ENCODE measurements at regions of chr1 and their contacts with region 1.

Region 1: DNA sequence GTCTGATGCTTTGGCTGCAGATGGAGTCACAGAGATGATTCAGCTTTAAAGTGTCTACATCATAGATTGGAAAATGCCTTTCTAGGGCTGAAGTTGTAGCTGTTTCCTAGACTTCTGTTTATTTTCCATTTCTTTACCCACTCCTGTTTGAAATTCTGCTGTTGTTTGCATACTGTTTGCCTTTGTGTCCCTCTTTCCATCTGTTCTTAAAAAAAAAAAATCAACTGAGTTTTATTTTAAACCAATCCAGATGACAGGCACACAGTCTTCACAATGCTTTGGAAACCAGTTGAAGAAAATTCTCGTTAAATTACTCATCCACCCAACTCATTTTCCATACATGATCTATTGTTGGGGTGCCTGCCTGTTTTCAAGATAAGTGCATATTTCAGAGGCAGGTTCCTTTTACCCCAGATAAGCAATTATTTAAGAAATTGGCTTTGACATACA is 245.9 kb downstream of the DISC1 start:
- DNase-seq: no peak
- H3K4me3 ChIP-seq: no peak overlapping the region
- H3K27ac ChIP-seq: no peak overlapping the region
- H3K4me1 ChIP-seq: peaks cover 5% of the 10 kb centered on the region
- H3K27me3 ChIP-seq: no peaks in the 10 kb centered on the region
- CTCF ChIP-seq: no peak
- EP300 ChIP-seq: no peak
- POLR2A ChIP-seq: no peak

Region 2: DNA sequence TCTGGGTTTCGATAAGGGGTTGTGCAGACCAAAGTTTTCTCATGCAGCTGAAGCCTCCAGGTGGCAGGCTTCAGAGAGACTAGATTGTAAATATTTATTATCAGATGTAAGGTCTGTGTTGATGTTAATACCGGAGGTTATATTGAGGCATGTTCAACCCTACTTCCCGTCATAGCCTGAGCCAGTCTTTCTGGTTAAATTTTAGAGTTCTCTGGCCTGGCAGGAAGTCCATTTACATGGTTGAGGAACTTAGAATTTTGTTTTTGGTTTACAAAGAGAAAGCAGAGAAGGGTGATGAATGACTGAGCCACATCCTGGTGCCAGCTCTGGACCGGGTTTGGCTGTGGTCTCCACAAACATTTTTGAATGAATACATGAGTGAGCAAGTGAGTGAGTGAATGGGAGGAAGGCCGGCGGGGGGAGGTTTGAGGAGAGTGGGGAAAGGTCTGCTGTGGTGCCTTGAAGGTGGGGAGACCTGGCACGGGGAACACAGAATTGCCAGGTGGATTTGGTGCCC is 27.4 kb before region 1 on chr1:
- intact Hi-C with region 1: no loop called
- DNase-seq: no peak
- H3K4me3 ChIP-seq: no peak overlapping the region
- H3K27ac ChIP-seq: no peak overlapping the region
- H3K4me1 ChIP-seq: peaks cover 6% of the 10 kb centered on the region
- H3K27me3 ChIP-seq: no peaks in the 10 kb centered on the region
- CTCF ChIP-seq: no peak
- EP300 ChIP-seq: no peak
- POLR2A ChIP-seq: no peak

Region 3: GRCh38 chr1:231931846-231932454 is 59.5 kb after region 1 on chr1:
- intact Hi-C with region 1: loop called in 1 of 4 experiments (anchors 10 kb)
- DNase-seq: no peak
- H3K4me3 ChIP-seq: no peak overlapping the region
- H3K27ac ChIP-seq: no peak overlapping the region
- H3K4me1 ChIP-seq: peaks cover 13% of the 10 kb centered on the region
- H3K27me3 ChIP-seq: no peaks in the 10 kb centered on the region
- CTCF ChIP-seq: no peak
- EP300 ChIP-seq: no peak
- POLR2A ChIP-seq: no peak

Region 4: GRCh38 chr1:231983588-231984193 is 111.2 kb after region 1 on chr1:
- intact Hi-C with region 1: no loop called
- DNase-seq: no peak
- H3K4me3 ChIP-seq: no peak overlapping the region
- H3K27ac ChIP-seq: no peak overlapping the region
- H3K4me1 ChIP-seq: no peaks in the 10 kb centered on the region
- H3K27me3 ChIP-seq: no peaks in the 10 kb centered on the region
- CTCF ChIP-seq: no peak
- EP300 ChIP-seq: no peak
- POLR2A ChIP-seq: no peak

Region 5: DNA sequence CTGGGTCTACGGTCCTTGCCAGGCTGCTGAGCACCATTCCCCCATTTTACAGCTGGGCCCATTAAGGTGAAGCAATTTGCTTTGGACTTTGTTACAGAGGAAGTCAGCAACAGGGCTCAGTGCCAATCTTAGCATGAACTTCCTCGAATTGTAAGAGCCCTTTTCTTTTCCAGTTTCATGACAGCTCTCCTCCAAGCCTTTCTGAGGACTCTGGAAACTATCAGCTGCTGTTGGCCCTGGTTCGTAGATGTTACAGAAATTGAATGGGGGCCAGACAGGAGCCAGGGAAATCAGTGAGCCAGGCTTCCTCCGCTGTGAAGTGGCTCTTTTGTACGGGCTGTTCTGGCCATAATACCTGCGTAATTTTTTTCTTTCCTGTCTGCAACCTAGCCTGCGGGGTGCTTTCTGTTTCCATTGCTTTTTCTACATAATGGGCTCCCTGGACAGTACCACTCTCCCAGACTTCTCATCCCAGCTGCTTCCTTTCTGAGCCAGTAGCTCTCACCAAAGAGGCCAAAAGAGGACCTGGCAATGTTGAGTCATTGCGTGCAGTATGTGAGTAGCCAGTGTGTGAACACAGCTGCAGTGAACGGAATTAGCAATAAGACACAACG is 140.4 kb after region 1 on chr1:
- intact Hi-C with region 1: no loop called
- DNase-seq: peak; percentile 23 to 46 (median 30)
- H3K4me3 ChIP-seq: no peak overlapping the region
- H3K27ac ChIP-seq: no peak overlapping the region
- H3K4me1 ChIP-seq: peaks cover 8% of the 10 kb centered on the region
- H3K27me3 ChIP-seq: no peaks in the 10 kb centered on the region
- CTCF ChIP-seq: no peak
- EP300 ChIP-seq: no peak
- POLR2A ChIP-seq: no peak